ENCODE measurements at regions of chr1 and their contacts with region 1.

Region 1: DNA sequence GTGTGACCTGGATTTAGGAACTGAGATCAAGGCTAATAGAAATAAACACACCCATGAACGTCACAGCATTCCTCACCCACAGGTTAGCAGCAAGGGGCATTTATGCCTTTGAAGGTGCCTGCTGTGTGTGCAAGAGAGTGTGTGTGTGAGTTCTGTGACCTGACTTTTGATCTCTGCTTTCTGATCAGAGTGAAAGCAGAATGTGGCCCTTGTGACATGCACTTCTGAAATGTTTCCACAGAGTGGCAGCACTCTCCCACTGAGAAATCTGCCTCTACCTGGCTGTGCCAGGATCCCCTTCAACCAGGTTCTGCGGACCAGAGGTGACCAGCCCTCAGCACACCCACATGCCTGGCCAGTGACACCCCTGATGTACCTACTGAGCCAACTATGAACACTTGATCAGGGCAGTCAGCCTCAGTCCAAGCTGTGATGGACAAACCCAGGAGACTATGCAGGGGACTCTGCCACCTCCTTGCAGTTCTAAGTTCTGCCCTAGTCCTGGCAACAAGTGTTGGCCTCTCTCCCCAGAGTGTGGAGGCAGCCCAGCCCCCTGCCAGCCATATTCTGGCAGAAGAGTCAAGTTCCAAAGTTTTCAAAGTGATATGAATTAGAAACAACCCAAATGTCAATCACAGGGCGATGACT is 41.0 kb downstream of the RXRG start:
- DNase-seq: peak; percentile 45

Region 2: DNA sequence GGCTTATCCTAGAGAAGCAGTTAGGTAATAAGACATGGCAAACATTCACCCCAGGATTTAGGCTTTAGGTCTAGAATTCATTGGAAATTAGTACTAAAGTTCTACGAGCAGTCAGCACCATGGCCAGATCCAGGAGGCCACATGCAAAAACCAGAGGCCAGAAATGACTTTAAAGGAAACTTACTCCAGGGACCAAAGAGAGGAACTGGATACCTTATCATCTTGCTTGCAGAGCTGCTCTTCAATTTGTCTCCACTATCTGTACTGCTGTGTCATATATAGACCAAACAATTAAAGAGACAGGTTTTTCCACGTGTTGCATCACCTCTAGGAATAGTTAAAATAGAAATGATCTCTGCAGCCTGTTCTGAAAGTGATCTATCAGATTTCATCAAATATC is 175.3 kb before region 1 on chr1:
- in situ Hi-C with region 1: no loop called
- DNase-seq: peak; percentile 1

Region 3: DNA sequence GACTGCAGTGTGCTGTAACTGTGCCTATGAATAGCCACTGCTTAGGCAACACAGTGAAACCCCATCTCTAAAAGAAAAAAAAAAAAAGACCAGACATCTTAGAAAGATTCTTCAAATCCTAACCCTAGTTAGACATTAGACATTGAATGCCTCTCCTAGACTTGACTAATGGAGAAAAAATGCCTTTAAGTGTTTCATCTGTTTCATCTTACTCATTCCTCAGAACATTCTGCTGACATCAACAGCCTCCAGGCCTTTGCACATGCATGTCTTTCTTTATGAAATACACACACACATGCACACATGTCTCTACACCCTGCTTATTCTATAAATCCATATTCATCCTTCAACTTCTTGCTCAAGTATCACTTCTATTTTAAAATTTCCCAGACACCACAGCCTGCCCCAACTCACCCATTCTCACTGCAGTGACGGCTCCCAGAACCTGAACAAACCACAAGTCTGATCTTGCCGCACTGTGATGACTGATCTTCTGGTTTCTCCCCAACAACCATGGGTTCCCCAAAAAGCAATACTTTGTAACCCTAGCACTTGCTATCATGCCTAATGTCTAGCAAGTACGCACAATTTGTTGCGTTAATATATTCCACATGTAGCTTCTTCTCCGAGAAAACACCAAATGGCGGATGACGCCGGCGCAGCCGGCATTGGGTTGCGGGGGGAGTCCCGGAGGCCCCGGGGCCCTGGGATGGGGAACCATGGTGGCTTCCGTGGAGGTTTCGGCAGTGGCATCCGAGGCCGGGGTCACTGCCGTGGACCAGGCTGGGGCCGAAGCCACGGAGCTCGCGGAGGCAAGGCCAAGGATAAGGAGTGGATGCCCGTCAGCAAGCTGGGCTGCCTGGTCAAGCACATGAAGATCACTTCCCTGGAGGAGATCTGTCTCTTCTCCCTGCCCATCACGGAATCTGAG is 177.2 kb after region 1 on chr1:
- in situ Hi-C with region 1: loop called (anchors 10 kb)
- DNase-seq: no peak

Region 4: DNA sequence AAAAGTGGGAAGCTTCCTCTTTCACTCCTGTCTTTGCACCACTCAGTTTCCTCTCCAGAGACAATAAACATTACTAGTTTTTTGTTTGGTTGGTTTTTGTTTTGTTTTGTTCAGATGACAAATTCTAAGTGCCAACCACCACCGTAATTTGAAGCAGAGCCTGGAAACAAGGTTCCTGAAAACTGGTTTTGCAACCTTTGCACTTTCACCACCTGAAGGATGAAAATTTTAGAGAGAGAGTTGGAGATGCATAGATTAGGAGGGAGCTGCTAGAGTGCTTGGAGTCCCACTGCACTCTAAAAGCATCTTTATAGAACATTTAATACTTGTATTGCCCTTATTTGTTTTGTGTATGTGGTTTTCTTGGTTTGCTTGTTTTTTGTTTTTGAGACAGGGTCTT is 206.9 kb after region 1 on chr1:
- in situ Hi-C with region 1: no loop called
- DNase-seq: no peak